Activated CD8-positive, alpha-beta T cell treated with anti-CD3 and anti-CD28 coated beads, Interleukin-2, amount 10 ng/mL, durations not matched to agents 7 days and 5 days (primary cell): ENCODE measurements at regions of chr2 and their contacts with region 1.

Region 1: DNA sequence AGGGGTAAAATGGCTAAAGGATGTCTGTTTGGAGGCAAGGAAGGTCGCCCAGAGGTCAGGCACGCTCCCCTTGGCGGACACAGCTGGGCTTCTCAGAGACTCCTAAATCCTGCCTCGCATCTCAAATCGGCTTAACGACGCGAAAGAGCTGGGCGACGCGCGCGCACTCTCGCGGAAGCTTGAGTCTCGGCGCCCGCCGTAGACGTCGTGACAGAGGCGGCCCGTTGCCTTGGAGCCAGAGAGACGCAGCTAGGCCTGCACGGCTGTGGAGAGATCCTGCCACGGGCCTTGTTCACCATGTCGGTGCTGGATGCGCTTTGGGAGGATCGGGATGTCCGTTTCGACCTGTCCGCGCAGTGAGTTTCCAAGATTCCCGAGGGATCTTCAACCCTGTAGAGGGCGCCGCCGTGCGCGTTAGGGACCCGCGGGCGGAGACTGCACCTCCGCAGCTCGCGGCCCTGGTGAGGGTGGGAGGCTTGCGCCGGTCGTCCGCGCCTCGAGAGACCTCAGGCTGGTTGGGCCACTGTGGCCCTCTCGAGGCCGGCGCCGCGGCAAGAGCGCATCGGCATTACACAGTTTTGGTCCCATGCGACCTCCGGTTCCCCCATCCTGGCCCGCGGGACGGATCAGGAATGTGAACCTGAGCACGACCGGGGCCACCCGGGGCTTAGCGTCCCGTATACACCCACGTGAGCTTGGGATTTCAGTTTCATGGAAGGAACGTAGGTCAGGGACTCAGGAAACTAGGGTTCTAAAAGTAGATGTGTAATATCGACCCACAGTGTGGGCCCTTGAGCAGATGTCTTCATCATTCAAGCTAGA is at the start of gene BBS5:
- DNase-seq: peak; percentile 85
- ATAC-seq: peak; percentile 98
- H3K4me3 Mint-ChIP-seq: peak within 1 kb of the TSS; percentile 84
- H3K27ac Mint-ChIP-seq: peak within 1 kb of the TSS; percentile 64
- H3K4me1 Mint-ChIP-seq: peaks cover 19% of the 10 kb centered on the region
- H3K27me3 Mint-ChIP-seq: no peaks in the 10 kb centered on the region
- total RNA-seq, gene BBS5: 1.9 to 2.2 TPM

Region 2: GRCh38 chr2:169452080-169452479 is 27.4 kb before region 1 on chr2:
- CTCF ChIA-PET with region 1: no interaction called
- POLR2A ChIA-PET with region 1: no interaction called
- DNase-seq: no peak
- ATAC-seq: no peak
- H3K4me3 Mint-ChIP-seq: no peak overlapping the region
- H3K27ac Mint-ChIP-seq: no peak overlapping the region
- H3K4me1 Mint-ChIP-seq: no peaks in the 10 kb centered on the region
- H3K27me3 Mint-ChIP-seq: peaks cover 10% of the 10 kb centered on the region

Region 3: GRCh38 chr2:169468841-169469240 is 10.6 kb before region 1 on chr2:
- CTCF ChIA-PET with region 1: interaction called, 11 read pairs
- POLR2A ChIA-PET with region 1: no interaction called
- DNase-seq: no peak
- ATAC-seq: peak; percentile 46
- H3K4me3 Mint-ChIP-seq: no peak overlapping the region
- H3K27ac Mint-ChIP-seq: no peak overlapping the region
- H3K4me1 Mint-ChIP-seq: no peaks in the 10 kb centered on the region
- H3K27me3 Mint-ChIP-seq: peaks cover 5% of the 10 kb centered on the region